GM12878 (cell line): ENCODE measurements at regions of chr6 and their contacts with region 1.

Region 1: GRCh38 chr6:149060300-149060997 is 257.1 kb upstream of the TAB2 start:
- DNase-seq: peak; percentile 90
- ATAC-seq: peak; percentile 78
- H3K4me3 ChIP-seq: peak overlapping the region; percentile 11; the same call in 1 of the 2 replicates
- H3K27ac ChIP-seq: peak overlapping the region; percentile 29
- H3K4me1 ChIP-seq: peaks cover 40% of the 10 kb centered on the region
- H3K27me3 ChIP-seq: no peaks in the 10 kb centered on the region
- CTCF ChIP-seq: no peak
- EP300 ChIP-seq: peak; percentile 47 to 66; a peak in 2 of 4 replicates
- POLR2A ChIP-seq: no peak
- RAD21 ChIP-seq: no peak

Region 2: GRCh38 chr6:149043476-149044130 is 16.8 kb before region 1 on chr6:
- CTCF ChIA-PET with region 1: interaction called, 174 read pairs
- POLR2A ChIA-PET with region 1: interaction called, 298 read pairs
- RAD21 ChIA-PET with region 1: interaction called, 521 read pairs
- SMC1A ChIA-PET with region 1: interaction called, 1,060 read pairs
- in situ Hi-C with region 1: no loop called
- intact Hi-C with region 1: loop called (anchors 1 kb)
- DNase-seq: no peak
- ATAC-seq: peak; percentile 43
- H3K4me3 ChIP-seq: no peak overlapping the region
- H3K27ac ChIP-seq: no peak overlapping the region
- H3K4me1 ChIP-seq: peaks cover 46% of the 10 kb centered on the region
- H3K27me3 ChIP-seq: no peaks in the 10 kb centered on the region
- CTCF ChIP-seq: peak; percentile 45 to 62 (median 45)
- EP300 ChIP-seq: no peak
- POLR2A ChIP-seq: no peak
- RAD21 ChIP-seq: peak; percentile 53; the same call in 1 of the 2 replicates

Region 3: DNA sequence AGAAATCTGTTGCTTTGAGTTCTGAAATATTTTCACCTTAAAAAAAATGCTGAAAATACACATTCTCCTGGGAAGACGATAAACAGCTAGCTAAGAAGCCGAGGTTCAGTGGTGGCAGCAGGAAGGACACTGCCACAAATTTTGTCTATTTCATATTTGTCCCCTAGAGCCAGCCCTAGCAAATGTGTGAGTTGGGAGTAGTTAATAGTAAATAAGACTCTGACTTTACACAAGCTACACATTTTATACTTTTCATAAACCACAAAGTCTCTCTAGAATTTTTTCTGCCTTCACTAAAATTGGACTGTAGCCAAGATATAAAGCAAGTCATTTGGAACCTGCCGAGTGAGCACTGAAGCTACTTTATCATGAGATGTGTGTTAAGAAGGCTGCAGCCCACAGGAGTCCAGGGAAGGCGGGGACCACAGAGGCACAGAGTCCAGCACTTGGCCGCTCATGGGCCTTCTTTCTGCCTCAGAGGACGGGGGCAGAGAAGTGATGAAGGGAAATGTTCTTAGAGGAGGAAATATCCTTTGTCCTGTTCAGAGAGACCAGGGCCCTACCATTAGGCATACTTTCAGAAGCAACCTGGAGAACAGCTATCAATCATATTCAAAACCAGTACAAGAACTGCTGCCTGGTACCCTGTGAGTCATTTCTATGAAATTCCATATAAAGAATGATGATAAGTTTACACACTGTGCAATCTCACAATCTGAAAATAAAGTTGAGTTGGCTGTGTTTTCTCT is 15.3 kb after region 1 on chr6:
- CTCF ChIA-PET with region 1: interaction called, 29 read pairs
- POLR2A ChIA-PET with region 1: interaction called, 33 read pairs
- RAD21 ChIA-PET with region 1: interaction called, 56 read pairs
- SMC1A ChIA-PET with region 1: interaction called, 88 read pairs
- in situ Hi-C with region 1: no loop called
- intact Hi-C with region 1: loop called (anchors 1 kb)
- DNase-seq: no peak
- ATAC-seq: no peak
- H3K4me3 ChIP-seq: no peak overlapping the region
- H3K27ac ChIP-seq: no peak overlapping the region
- H3K4me1 ChIP-seq: peaks cover 31% of the 10 kb centered on the region
- H3K27me3 ChIP-seq: no peaks in the 10 kb centered on the region
- CTCF ChIP-seq: no peak
- EP300 ChIP-seq: no peak
- POLR2A ChIP-seq: no peak
- RAD21 ChIP-seq: no peak